Right ventricle myocardium superior (tissue), 1 donor: ENCODE measurements at regions of chr2 and their contacts with region 1.

Region 1: DNA sequence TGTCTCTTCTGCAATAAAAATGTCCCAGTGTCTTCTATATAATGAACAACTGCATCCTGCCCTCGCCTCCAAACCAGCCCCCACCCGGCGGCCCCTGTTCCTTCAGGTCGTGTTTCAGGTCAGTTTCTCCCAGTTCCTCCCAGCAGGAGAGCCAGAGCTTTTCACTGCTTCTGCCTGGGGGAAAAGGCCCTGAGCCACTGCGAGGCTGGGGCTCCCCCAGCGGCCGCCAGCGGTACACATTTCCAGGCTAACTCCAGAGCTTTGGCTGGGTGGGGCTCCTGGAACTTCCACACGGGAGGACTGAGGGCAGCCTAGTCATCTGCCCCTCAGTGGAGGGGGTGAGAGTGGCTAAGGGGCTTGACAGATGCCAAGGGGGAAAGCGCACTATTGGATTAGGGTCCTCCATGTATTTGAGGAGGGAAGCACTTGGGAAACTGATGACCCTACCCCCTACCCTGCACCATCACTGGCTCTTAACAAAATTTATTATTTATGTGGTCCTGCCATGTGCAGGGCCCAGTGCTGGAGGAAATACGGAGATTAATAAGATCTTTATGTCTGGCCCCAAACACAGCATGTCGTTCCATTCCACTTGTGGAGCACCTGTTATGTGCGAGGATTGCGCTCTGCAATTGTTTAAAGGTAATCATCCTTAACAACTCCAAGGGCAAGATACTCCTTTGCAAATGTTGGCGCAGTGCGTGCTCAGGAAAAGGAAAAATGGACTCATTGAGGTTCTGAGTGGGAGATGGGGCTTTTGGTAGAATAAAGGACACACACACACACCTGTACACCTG is 17.3 kb upstream of the CYS1 start:
- DNase-seq: peak; percentile 81
- ATAC-seq: peak; percentile 97

Region 2: GRCh38 chr2:9813312-9814133 is 284.0 kb before region 1 on chr2:
- intact Hi-C with region 1: loop called (anchors 5 kb)
- DNase-seq: peak; percentile 81
- ATAC-seq: peak; percentile 95

Region 3: GRCh38 chr2:10019174-10019573 is 78.4 kb before region 1 on chr2:
- intact Hi-C with region 1: no loop called
- DNase-seq: no peak
- ATAC-seq: no peak